Dorsolateral prefrontal cortex (tissue), 120 donors: ENCODE measurements at regions of chr22 and their contacts with region 1.

Region 1: GRCh38 chr22:29635734-29636357 is 32.4 kb downstream of the NF2 start:
- DNase-seq: peak in 1 of 10 donors; percentile 34
- H3K4me3 ChIP-seq: no peak overlapping the region
- H3K27ac ChIP-seq: no peak overlapping the region
- H3K27me3 ChIP-seq: no peaks in the 10 kb centered on the region
- CTCF ChIP-seq: peak; percentile 51 to 86 (median 70)

Region 2: DNA sequence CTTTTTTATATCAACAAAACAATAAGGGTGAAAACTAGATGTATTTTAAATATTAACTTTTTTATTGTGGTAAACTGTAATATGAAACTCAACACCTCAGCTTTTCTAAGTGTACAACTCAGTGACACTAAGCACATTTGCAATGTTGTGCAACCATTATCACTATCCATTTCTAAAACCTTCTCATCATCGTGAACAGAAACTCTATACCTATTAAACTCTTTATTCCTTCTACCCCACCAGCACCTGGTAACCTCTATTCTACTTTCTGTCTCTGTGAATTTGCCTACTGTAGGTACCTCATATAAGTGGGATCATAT is 453.8 kb after region 1 on chr22:
- intact Hi-C with region 1: loop called (anchors 5 to 10 kb)
- DNase-seq: no peak
- H3K4me3 ChIP-seq: no peak overlapping the region
- H3K27ac ChIP-seq: no peak overlapping the region
- H3K27me3 ChIP-seq: peaks cover 0 to 5% (median 0%) of the 10 kb centered on the region in 45 donors
- CTCF ChIP-seq: no peak

Region 3: GRCh38 chr22:30094804-30095203 is 459.0 kb after region 1 on chr22:
- intact Hi-C with region 1: loop called in 1 of 2 experiments (anchors 10 kb)
- DNase-seq: no peak
- H3K4me3 ChIP-seq: no peak overlapping the region
- H3K27ac ChIP-seq: no peak overlapping the region
- H3K27me3 ChIP-seq: peaks cover 0 to 9% (median 0%) of the 10 kb centered on the region in 45 donors
- CTCF ChIP-seq: no peak